ENCODE measurements at regions of chr22 and their contacts with region 1.

Region 1: GRCh38 chr22:20116951-20117645 is at the start of gene TRMT2A:
- DNase-seq: peak; percentile 99
- ATAC-seq: peak; percentile 85
- H3K4me3 Mint-ChIP-seq: peak within 1 kb of the TSS; percentile 97
- H3K27ac Mint-ChIP-seq: peak within 1 kb of the TSS; percentile 96
- H3K4me1 Mint-ChIP-seq: peaks cover 63% of the 10 kb centered on the region
- H3K27me3 Mint-ChIP-seq: no peaks in the 10 kb centered on the region
- CTCF ChIP-seq: no peak
- total RNA-seq, gene TRMT2A: 101 to 105 TPM

Region 2: DNA sequence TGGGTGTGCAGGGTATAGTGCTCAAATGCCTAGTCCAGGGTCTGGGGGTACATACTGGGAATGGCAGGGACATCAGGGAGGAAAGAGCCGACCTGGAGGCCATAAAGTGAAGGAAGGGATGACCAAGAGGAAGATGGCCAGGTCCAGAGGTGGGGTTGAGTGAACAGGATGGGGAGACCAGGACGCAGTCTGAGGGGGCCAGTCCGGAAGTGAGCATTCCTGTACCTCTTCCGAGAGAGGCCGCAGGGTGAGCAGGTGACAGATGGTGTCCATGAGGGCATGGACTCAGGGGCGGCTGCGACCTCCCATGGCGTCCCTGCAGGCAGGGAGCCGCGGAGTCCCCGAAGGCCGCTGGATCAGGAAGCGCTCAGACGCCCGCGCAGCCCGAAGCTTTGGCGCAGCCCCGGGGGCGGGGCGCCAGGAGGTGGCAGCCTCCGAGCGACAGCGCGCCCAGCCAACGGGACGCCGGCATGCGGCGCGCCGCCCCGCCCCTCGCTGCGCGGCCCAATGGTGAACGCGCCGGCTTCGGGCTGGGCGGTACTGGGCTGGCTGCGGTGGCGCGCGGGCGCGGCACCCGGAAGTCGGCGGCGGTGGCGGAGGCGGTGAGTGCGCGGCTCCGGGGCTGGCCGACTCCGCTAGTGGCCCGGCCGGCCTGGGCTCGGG is 96.4 kb before region 1 on chr22 and contains the start of gene TANGO2:
- CTCF ChIA-PET with region 1: interaction called, 4 read pairs
- POLR2A ChIA-PET with region 1: interaction called, 12 read pairs
- intact Hi-C with region 1: no loop called
- DNase-seq: peak; percentile 91
- ATAC-seq: peak; percentile 96
- H3K4me3 Mint-ChIP-seq: peak within 1 kb of the TSS; percentile 93
- H3K27ac Mint-ChIP-seq: peak within 1 kb of the TSS; percentile 92
- H3K4me1 Mint-ChIP-seq: peaks cover 25% of the 10 kb centered on the region
- H3K27me3 Mint-ChIP-seq: peaks cover 9% of the 10 kb centered on the region
- CTCF ChIP-seq: no peak
- total RNA-seq, gene TANGO2: 15.7 to 18.3 TPM

Region 3: DNA sequence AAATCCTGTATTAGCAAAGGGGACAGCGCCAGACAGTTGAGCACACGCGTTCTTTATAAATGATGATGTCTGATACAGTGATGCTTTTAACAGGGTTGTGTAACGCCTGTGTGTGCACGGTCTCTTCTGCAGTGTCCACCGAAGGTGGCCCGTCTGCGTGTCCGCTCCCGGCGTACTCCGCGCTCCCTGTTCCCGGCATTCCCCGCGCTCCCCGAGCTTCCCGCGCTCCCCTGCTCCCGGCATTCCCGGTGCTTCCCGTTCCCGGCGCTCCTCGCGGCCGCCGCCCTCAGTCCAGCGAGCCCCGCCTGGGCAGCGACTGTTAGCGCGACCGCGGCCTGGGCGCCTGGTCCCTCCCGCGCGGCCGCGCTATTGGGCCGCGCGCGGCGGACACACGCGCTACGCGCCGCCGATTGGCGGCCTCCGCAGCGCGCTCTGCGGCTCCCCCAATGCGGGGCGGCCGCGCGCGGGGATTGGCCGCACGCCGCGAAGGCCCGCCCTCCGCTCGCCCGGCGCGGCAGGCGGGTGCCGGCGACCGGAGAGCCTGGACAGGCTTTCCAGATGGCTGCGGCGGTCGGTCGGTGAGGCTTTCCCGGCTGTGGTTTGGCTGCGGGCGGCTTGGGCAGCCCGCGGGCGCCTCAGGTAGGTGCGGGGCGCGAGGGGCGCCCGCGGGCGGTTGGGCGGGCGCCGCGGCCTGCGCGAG is 37.2 kb before region 1 on chr22 and contains the start of gene DGCR8:
- CTCF ChIA-PET with region 1: interaction called, 3 read pairs
- POLR2A ChIA-PET with region 1: interaction called, 17 read pairs
- intact Hi-C with region 1: loop called (anchors 5 kb)
- DNase-seq: peak; percentile 56
- ATAC-seq: peak; percentile 92
- H3K4me3 Mint-ChIP-seq: peak within 1 kb of the TSS; percentile 91
- H3K27ac Mint-ChIP-seq: peak within 1 kb of the TSS; percentile 88
- H3K4me1 Mint-ChIP-seq: peaks cover 35% of the 10 kb centered on the region
- H3K27me3 Mint-ChIP-seq: no peaks in the 10 kb centered on the region
- CTCF ChIP-seq: no peak
- total RNA-seq, gene DGCR8: 35.0 to 38.8 TPM

Region 4: DNA sequence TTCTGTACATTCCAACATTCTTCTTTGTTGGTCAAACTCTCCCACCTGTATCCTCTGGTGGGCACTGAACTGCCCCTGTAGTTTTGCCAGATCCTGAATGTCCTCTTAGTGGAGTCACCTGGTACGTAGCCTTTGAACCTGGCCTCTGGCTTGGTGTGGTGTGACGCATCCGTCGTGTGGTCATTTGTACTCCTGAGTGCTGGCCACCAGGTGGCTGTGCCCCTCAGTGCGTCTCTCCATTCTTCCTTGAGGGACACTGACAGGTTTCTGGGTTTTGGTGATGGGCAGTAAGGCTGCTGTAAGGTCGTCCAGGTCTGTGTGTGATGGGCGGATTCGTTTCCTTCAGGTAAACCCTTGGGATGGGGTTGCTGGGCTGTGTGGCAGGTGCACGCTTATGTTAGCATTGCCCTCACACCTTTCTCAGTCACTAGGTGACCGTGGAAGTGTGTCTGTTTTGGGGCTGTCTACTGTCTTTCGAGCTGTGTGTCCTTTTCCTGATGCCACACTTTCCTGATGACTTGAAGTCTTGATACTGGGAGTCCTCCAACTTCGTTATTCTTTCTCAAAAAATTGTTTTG is 14.8 kb before region 1 on chr22:
- CTCF ChIA-PET with region 1: interaction called, 43 read pairs
- POLR2A ChIA-PET with region 1: interaction called, 36 read pairs
- intact Hi-C with region 1: loop called (anchors 2 kb)
- DNase-seq: no peak
- ATAC-seq: no peak
- H3K4me3 Mint-ChIP-seq: no peak overlapping the region
- H3K27ac Mint-ChIP-seq: peak overlapping the region; percentile 61
- H3K4me1 Mint-ChIP-seq: peaks cover 53% of the 10 kb centered on the region
- H3K27me3 Mint-ChIP-seq: no peaks in the 10 kb centered on the region
- CTCF ChIP-seq: peak; percentile 24

Region 5: DNA sequence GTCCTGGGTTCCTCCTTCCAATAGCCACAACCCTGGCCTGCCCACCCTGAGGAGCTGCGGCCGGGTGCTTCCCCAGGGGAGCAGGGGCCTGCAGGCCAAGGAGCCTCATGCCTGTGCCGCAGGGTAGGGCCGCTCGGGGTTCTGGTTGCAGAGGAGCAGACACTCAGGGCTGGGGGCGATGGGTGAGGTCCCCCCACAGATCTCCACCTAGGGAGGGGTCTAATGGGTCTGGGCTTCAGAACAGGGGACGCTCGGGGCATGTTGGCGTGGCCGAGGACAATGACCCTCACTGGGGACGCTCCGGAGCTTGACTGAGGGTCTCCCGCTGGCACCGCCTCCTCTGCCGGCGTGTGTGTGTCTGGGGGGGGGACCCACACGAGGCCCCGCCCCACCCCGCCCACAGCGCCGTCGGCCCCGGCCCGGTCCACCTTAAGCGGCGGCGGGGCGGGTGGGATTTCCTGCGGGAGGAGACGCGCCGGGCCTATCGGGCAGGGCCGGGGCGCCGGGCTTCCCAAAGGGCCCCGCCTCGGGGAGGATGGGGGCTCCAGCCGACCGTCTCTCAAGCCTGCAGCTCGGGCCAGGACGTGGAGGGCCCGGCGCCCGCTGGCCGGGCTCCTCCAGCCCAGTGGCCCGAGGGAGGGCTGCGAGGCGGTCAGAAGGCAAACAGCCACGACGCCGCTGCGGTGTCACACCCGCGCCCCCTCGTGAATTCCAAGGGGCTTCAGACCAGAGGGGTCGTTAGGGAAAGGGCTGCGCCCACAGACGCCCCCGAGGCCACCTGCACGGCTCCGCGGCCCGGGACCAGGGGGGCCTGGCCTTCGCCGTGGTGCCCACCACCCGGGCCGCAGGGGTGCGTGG is 13.9 kb after region 1 on chr22:
- CTCF ChIA-PET with region 1: interaction called, 11 read pairs
- POLR2A ChIA-PET with region 1: interaction called, 111 read pairs
- intact Hi-C with region 1: no loop called
- DNase-seq: peak; percentile 72
- ATAC-seq: peak; percentile 37
- H3K4me3 Mint-ChIP-seq: peak overlapping the region; percentile 46
- H3K27ac Mint-ChIP-seq: no peak overlapping the region
- H3K4me1 Mint-ChIP-seq: peaks cover 45% of the 10 kb centered on the region
- H3K27me3 Mint-ChIP-seq: no peaks in the 10 kb centered on the region
- CTCF ChIP-seq: no peak

Region 6: GRCh38 chr22:20174785-20175596 is 57.9 kb after region 1 on chr22:
- CTCF ChIA-PET with region 1: no interaction called
- POLR2A ChIA-PET with region 1: no interaction called
- intact Hi-C with region 1: no loop called
- DNase-seq: no peak
- ATAC-seq: no peak
- H3K4me3 Mint-ChIP-seq: no peak overlapping the region
- H3K27ac Mint-ChIP-seq: no peak overlapping the region
- H3K4me1 Mint-ChIP-seq: no peaks in the 10 kb centered on the region
- H3K27me3 Mint-ChIP-seq: no peaks in the 10 kb centered on the region
- CTCF ChIP-seq: no peak

Region 7: DNA sequence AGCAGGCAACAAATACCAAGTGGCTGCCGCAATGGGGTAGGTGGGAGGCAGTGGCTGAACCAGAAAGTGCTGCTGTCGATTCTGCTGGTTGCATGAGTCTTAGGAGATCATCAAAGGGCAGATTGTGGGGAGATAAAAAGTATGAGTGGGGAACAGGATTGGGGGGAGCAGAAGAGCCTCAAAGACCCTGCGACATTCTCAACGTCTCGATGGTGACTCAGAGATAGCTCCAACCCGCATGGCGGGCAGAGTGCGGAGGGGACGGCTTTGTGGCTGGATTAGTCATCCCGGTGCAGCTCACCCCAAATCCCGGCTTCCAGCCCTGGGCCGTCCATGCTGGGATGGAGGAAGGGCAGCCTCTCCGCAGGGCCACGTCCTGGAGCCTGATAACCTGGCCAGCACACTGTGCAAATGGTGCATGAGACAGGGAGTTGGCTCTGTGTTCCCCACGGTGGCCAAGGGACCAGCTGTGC is 162.6 kb after region 1 on chr22:
- CTCF ChIA-PET with region 1: no interaction called
- POLR2A ChIA-PET with region 1: no interaction called
- intact Hi-C with region 1: no loop called
- DNase-seq: peak; percentile 23
- ATAC-seq: peak; percentile 62
- H3K4me3 Mint-ChIP-seq: no peak overlapping the region
- H3K27ac Mint-ChIP-seq: no peak overlapping the region
- H3K4me1 Mint-ChIP-seq: peaks cover 3% of the 10 kb centered on the region
- H3K27me3 Mint-ChIP-seq: no peaks in the 10 kb centered on the region
- CTCF ChIP-seq: no peak